PC-9 (cell line): ENCODE measurements at regions of chr19 and their contacts with region 1.

Region 1: GRCh38 chr19:44002566-44003460 is at the start of gene ZNF230:
- DNase-seq: peak; percentile 79 to 94
- H3K4me3 ChIP-seq: peak within 1 kb of the TSS; percentile 86
- H3K27ac ChIP-seq: no peak within 1 kb of the TSS
- H3K4me1 ChIP-seq: peaks cover 13% of the 10 kb centered on the region
- H3K27me3 ChIP-seq: no peaks in the 10 kb centered on the region
- CTCF ChIP-seq: no peak
- total RNA-seq, gene ZNF230: 4.0 and 4.8 TPM in 2 replicates

Region 2: DNA sequence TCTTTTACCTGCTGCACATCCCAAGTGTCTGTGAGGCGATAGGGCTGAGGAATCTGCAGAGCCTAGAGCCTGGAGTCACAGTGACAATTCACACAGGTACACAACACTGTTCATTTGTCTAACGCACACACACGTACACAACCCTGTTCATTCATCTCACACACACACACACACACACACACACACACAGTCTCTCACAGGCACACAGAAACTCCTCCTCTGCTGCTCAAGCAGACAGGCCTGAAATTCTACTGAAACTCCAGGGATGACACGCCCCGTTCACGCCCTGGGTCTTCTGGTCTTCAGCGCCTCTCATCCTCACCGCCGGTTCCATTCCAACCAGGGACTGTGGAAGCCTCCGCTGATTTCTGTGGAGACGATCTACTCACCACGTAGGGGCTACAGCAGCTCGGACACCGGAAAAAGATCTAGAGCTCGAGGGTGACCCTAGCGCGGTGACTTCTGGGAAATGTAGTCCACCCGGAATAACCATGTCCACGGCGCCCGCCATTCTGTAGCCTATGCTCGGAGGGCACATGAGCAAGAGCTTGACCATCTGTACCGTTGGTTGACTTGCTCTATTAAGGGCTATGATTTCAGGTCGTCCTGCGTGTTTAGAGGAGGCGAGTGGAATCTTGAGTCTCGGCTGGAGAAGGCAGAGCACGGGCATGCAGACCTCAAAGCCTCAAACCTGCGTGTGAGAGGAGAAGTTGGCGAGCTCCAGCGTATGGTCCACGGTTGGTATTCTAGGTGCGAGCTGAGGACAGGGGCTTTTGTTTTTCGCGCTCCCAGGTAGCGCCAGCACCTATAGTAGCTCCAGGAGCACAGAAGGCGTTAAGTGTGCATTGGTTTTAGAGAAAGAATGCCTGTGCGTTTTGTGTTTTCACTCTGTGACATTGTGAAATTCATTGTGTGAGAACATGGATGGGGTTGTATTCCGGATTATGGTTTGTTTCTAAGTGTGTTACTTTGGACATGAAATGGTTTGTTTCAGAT is 101.1 kb before region 1 on chr19:
- CTCF ChIA-PET with region 1: no interaction called
- POLR2A ChIA-PET with region 1: no interaction called
- intact Hi-C with region 1: no loop called
- DNase-seq: peak; percentile 61 to 68
- H3K4me3 ChIP-seq: peak overlapping the region; percentile 63
- H3K27ac ChIP-seq: no peak overlapping the region
- H3K4me1 ChIP-seq: 0 out of 2 replicates have a peak, but pooled peaks cover 5% of the 10 kb centered on the region
- H3K27me3 ChIP-seq: no peaks in the 10 kb centered on the region
- CTCF ChIP-seq: no peak

Region 3: DNA sequence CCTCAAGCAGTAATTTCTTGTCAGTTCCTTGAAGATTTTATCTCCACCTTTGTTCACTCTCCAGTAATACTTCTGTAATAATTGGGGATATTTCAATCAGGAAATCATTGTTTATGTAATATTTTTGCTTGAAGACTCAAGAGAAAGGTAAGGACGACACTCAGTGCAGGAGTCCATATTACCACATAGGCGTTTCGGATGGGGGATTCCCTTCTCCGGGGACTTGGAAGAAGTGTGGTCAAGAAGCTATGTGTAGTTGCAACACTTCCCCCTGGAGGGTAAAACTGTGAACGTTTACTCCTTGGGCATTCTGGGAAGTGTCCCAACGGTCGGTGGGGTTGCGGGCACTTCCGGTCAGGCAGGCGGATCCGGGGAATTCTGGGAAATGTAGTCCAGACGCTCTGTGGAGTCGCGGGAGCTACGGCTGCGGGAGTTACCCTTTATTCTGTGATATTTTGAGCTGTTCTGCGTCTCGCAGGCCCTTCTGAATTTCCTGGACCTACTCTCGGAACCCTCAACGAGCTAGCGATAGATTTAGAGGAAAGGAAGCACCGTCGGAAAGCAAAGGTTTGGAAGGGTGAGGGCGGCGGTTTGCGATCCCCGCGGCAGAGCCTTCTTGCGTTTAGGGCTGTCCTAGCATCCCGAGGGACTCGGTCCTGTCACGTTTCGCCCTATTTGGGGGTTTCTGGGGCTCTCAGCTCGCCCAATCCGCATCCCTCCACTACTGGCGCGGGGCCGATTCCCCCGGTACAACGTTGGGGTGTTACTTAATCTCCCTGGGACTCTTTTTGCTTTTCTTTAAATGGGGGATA is 51.8 kb before region 1 on chr19 and contains the start of gene ZNF221:
- CTCF ChIA-PET with region 1: interaction called, 7 read pairs
- POLR2A ChIA-PET with region 1: no interaction called
- intact Hi-C with region 1: loop called (anchors 2 kb)
- DNase-seq: peak; percentile 76 to 86
- H3K4me3 ChIP-seq: peak within 1 kb of the TSS; percentile 66
- H3K27ac ChIP-seq: 0 out of 2 replicates have a peak within 1 kb of the TSS, but pooled peaks have one; percentile 34
- H3K4me1 ChIP-seq: 0 out of 2 replicates have a peak, but pooled peaks cover 4% of the 10 kb centered on the region
- H3K27me3 ChIP-seq: no peaks in the 10 kb centered on the region
- CTCF ChIP-seq: no peak
- total RNA-seq, gene ZNF221: 1.7 and 1.9 TPM in 2 replicates

Region 4: DNA sequence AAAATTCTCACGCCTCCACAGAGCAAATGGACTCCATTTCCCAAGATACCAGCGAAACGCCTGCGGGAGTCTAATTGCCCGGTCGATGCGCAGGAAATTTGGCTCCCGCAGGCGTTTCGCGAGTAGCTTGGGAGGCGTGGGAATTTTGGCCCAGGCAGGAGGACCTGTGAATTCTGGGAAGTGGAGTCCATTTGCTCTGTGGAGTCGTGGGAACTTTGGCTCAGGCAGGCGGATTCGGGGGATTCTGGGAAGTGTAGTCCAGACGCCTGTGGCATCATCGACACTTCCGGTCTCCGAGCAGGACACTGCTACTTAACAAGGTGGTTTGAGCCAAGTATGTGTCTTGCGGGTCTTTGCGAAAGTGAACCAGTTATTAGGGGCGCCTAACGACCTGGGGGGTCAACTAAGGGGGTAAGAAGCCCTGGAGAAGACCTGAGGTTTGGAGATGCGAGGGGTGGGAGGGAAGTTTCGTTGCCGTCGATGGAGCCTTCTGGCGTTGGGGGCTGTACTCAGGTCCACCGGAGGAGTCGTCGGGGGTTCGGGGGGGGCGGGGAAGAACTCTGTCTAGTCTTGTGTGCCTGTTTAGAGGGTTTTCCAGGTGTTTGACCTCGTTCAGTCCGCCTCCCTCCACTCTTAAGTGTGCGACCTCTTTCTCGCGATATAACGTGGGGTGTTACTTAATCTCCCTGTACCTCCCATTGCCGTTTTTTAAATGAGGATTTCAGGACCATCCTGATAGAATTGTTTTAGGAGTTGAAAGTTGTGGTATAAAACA is 18.7 kb before region 1 on chr19 and contains the start of gene ZNF155:
- CTCF ChIA-PET with region 1: no interaction called
- POLR2A ChIA-PET with region 1: no interaction called
- intact Hi-C with region 1: loop called (anchors 1 kb)
- DNase-seq: peak; percentile 84 to 94
- H3K4me3 ChIP-seq: peak within 1 kb of the TSS; percentile 82
- H3K27ac ChIP-seq: 0 out of 2 replicates have a peak within 1 kb of the TSS, but pooled peaks have one; percentile 4
- H3K4me1 ChIP-seq: no peaks in the 10 kb centered on the region; the same call in 1 of the 2 replicates
- H3K27me3 ChIP-seq: no peaks in the 10 kb centered on the region
- CTCF ChIP-seq: no peak
- total RNA-seq, gene ZNF155: 5.0 and 6.1 TPM in 2 replicates

Region 5: DNA sequence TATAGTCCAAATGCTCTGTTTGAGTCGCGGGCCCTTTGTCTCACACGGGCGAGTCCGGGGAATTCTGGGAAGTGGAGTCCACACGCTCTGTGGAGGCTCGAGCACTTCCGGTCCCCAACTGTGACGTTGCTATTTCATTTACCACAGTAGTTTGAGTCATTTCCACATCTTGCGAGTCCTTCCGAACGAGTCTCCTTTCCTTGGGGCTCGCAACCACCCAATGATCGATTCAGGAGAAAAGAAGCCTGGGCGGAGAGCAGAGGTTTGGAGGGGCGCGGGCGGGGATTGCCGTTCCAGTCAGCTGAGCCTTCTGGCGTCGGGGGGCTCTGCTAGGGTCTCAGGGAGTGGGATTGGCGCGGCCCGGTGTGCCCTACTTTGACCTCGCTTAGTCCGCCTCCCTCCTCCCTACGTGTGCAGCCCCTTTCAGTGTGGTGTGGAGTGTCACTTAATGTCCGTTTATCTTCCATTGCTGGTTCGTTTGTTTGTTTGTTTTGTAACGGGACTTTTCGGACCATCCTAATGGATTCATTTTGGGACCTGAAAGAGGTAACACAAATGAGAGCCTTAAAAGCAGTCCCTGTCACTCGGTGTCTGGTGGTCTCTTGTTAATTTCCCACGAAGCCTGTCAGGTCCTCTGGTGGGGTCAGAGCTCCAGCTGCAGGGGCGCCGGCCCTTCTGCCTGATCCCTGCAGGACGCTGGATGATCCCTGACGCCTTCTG is 22.6 kb after region 1 on chr19 and contains the start of gene ZNF222:
- CTCF ChIA-PET with region 1: no interaction called
- POLR2A ChIA-PET with region 1: interaction called, 10 read pairs
- intact Hi-C with region 1: loop called (anchors 1 kb)
- DNase-seq: peak; percentile 62 to 77
- H3K4me3 ChIP-seq: peak within 1 kb of the TSS; percentile 84
- H3K27ac ChIP-seq: no peak within 1 kb of the TSS
- H3K4me1 ChIP-seq: peaks cover 13% of the 10 kb centered on the region
- H3K27me3 ChIP-seq: no peaks in the 10 kb centered on the region
- CTCF ChIP-seq: no peak
- total RNA-seq, gene ZNF222: 1.8 and 2.1 TPM in 2 replicates

Region 6: DNA sequence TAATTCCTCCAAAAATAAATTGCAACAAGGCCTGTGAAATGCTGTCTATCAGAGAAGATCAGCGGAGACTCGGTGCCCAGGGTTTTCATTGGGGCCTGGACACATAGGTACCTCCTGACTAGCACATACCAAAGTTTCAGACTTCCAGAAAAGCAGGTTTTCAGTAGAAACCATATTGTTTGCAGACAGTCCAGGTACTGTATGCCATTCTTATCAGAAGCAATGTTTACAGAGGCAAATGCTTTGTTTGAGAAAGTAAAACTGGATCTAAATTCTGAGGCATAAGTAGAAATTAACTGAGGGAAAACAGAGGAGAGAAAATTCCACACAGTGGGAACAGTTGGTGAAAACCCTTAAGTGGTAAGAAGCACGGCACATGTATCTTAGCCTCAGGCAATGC is 432.7 kb after region 1 on chr19:
- CTCF ChIA-PET with region 1: no interaction called
- POLR2A ChIA-PET with region 1: no interaction called
- intact Hi-C with region 1: no loop called
- DNase-seq: no peak
- H3K4me3 ChIP-seq: no peak overlapping the region
- H3K27ac ChIP-seq: no peak overlapping the region
- H3K4me1 ChIP-seq: no peaks in the 10 kb centered on the region
- H3K27me3 ChIP-seq: no peaks in the 10 kb centered on the region
- CTCF ChIP-seq: no peak

Region 7: GRCh38 chr19:44890366-44891015 is 887.7 kb after region 1 on chr19:
- CTCF ChIA-PET with region 1: no interaction called
- POLR2A ChIA-PET with region 1: no interaction called
- intact Hi-C with region 1: no loop called
- DNase-seq: peak; percentile 100
- H3K4me3 ChIP-seq: peak overlapping the region; percentile 61
- H3K27ac ChIP-seq: peak overlapping the region; percentile 75
- H3K4me1 ChIP-seq: peaks cover 22% of the 10 kb centered on the region
- H3K27me3 ChIP-seq: no peaks in the 10 kb centered on the region
- CTCF ChIP-seq: no peak